Activated naive CD4-positive, alpha-beta T cell treated with anti-CD3 and anti-CD28 coated beads, Interleukin-2, amount 10 ng/mL, durations not matched to agents 7 days and 5 days (primary cell): ENCODE measurements at regions of chr11 and their contacts with region 1.

Region 1: GRCh38 chr11:128831174-128832120 is 35.6 kb downstream of the KCNJ1 start:
- DNase-seq: peak; percentile 91
- H3K4me3 Mint-ChIP-seq: peak overlapping the region; percentile 33
- H3K27ac Mint-ChIP-seq: peak overlapping the region; percentile 86
- H3K4me1 Mint-ChIP-seq: peaks cover 37% of the 10 kb centered on the region
- H3K27me3 Mint-ChIP-seq: peaks cover 8% of the 10 kb centered on the region

Region 2: GRCh38 chr11:128757235-128757711 is 74.2 kb before region 1 on chr11:
- CTCF ChIA-PET with region 1: interaction called, 10 read pairs
- DNase-seq: peak; percentile 79
- H3K4me3 Mint-ChIP-seq: no peak overlapping the region
- H3K27ac Mint-ChIP-seq: peak overlapping the region; percentile 80
- H3K4me1 Mint-ChIP-seq: peaks cover 77% of the 10 kb centered on the region
- H3K27me3 Mint-ChIP-seq: no peaks in the 10 kb centered on the region

Region 3: DNA sequence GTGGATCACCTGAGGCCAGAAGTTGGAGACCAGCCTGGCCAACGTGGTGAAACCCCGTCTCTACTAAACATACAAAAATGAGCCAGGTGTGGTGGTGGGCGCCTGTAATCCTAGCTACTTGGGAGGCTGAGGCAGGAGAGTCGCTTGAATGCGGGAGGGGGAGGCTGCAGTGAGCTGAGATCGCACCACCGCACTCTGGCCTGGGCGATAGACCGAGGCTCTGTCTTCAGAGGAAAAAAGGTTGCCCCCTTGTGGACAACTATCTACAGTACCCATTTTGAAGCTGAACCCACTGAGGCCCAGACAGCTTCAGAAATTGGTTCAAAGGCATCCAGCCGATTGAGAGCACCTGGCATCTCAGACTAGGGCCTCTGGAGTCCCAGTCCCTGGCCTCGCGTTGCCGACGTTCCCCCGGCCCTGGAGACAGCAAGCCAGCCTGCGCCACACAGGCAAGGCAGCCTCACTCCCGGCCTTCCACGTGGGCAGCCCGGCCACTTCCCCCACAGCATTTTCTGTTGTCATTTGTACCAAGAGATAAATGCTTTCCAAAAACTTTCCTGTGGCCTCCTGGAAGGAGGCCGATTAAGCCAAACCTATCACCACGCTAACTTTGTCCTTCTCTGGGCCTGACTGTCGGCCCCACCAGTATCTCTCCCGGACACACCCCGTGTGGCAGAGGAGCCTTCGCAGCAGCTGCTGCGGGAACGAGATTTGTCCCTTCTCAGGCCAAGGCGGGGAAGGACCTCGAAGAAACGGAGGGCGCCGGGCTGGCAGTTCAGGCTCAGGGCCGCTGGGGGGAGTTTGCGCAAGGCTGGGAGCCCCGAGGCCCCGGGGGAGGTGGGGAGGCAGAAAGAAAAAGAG is 54.8 kb before region 1 on chr11:
- CTCF ChIA-PET with region 1: interaction called, 25 read pairs
- DNase-seq: peak; percentile 33
- H3K4me3 Mint-ChIP-seq: no peak overlapping the region
- H3K27ac Mint-ChIP-seq: peak overlapping the region; percentile 50
- H3K4me1 Mint-ChIP-seq: peaks cover 45% of the 10 kb centered on the region
- H3K27me3 Mint-ChIP-seq: no peaks in the 10 kb centered on the region

Region 4: DNA sequence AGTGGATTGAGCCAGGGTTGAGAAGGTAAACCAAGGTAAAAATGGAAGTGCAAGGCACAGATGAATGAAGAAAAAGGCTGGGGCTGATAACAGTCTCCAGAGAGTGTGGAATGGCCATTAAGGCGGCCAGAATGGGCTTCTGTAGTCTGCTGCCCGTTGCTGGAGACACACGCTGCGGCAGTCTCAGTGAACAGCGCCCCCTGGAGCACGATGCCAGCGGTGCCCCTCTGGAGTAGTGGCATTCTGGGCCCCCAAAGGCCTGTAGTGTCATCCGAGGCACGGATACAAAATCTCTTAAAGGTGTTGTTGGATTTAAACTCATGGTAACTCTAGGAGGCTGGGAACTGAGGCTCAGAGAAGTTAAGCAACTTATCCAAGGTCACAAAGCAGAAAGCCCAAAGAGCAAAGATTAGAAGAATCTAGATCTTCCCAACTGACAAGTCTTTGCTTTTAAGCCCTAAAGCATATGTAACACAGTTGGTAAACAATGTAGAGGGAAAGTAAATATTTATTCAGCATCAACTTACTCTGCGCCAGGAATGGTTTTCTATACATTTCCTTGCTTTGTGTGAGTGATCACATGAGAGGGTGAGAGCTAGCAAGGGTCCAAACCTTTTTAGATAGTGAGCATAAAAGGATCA is 17.5 kb after region 1 on chr11:
- CTCF ChIA-PET with region 1: interaction called, 95 read pairs
- DNase-seq: peak; percentile 71
- H3K4me3 Mint-ChIP-seq: no peak overlapping the region
- H3K27ac Mint-ChIP-seq: no peak overlapping the region
- H3K4me1 Mint-ChIP-seq: peaks cover 31% of the 10 kb centered on the region
- H3K27me3 Mint-ChIP-seq: peaks cover 7% of the 10 kb centered on the region